ENCODE measurements at regions of chr3 and their contacts with region 1.

Region 1: GRCh38 chr3:69671082-69671952 is 67.9 kb upstream of the MITF start:
- DNase-seq: peak; percentile 61
- H3K4me3 ChIP-seq: no peak overlapping the region
- H3K27ac ChIP-seq: no peak overlapping the region
- H3K4me1 ChIP-seq: no peaks in the 10 kb centered on the region
- H3K27me3 ChIP-seq: peaks cover 23% of the 10 kb centered on the region

Region 2: DNA sequence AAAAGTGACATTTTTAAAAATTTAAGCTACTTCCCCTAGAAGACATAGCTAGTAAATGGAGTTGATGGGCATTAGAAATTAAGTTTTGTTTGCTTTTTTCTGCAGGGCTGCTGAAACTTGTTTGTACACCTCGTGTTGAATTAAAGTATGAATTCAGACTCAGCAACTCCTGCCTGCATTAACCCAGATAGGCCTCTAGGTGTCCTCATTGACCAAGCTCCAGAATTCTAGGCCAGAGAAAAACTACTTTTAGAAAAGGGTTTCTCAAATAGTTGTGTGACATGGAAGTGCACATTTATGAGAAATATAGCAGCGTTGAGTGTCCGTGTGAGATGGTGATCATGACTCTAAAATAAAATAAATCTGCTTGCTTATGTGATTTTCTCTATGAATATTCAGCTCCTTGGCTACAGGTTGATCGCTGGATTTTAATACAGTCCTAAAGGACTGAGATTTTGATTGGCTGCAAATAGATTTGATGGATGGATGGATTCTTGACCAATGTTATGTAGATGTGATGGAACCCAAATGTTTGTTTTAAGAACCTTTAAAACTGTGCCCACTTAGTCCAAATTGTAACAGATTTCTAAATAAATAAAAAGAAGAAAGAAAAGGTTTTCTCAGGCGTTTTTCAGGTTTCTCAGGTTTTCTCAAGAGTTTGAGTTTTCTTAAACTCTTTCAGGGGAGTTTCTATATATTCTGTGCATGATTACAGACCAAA is 509.6 kb before region 1 on chr3:
- in situ Hi-C with region 1: loop called (anchors 25 kb)
- DNase-seq: peak; percentile 69
- H3K4me3 ChIP-seq: no peak overlapping the region
- H3K27ac ChIP-seq: no peak overlapping the region
- H3K4me1 ChIP-seq: no peaks in the 10 kb centered on the region
- H3K27me3 ChIP-seq: peaks cover 9% of the 10 kb centered on the region

Region 3: DNA sequence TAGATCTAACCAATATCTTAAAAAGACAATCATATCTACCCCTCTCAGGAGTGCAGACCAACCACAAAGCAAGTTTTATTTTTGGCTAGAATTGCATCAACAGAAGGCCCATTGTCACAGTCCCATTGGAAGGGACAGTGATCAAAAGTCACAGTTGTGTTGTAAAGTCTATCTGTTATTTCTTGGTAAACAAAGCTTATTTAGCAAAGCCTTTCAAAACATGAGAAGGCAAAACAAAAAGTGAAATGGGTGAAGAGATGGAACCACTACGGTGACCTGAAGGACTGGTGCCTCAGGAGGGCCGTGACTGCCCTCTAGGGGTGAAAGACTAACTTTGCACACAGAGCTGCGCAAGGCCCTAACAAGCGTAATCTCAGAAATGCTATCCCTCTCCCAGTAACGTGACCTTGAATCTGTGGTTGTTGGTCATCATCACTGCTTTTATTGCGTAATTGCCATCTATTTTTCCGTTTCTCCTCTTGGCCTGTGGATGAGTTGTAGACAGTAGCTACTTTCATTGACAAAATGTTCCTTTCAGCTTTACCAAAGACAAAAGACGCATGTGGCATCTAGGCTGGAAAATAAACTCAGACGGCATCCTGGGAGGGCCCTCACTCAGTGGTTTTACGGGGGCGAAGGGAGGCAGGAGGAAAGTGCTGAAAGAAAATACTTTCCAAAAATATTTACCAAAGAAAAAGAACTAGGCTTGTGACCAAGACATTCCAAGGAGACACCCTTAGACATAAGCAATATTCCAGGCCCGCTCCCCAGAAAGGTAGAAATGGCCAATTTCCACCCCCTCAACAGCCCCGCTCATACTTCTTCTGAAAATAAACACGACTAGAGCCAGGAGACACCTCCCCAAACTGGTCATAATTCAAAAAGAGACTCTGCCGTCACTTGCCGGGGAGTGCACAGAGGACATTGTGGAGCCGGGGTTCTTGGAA is 364.8 kb before region 1 on chr3:
- in situ Hi-C with region 1: loop called (anchors 25 kb)
- DNase-seq: peak; percentile 90
- H3K4me3 ChIP-seq: no peak overlapping the region
- H3K27ac ChIP-seq: no peak overlapping the region
- H3K4me1 ChIP-seq: no peaks in the 10 kb centered on the region
- H3K27me3 ChIP-seq: no peaks in the 10 kb centered on the region

Region 4: DNA sequence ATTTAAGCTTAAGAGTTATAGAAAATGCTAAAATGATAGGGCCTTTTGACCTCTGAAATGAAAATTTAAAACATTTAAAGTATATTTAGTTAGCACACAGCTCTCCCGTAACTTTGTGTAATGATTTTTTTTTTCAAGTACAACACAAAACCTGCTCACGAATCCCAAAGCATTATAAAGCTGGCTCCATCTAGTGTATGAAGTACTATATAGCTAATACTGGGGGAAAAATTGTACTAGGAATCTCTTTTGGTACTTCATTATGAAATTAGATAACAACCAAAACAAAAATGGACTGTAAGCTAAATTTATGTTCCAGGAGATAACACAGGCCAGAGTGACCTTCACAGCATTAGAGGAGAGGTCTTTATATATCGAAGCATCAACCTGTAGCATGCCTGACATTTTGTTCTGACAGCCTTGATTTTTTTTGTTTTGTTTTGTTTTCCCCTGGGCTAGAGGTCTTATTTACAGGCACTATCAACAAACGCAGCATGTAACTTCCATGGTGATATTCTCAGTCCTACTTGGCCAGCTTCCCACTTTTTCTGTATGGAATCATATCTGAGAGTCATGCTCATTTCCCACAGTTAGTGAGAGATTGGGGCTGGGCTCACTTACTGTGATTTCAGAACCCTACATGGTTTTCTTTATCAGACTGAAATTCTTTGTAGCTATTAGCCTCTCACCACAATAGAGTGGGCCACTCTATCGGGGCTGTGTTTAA is 184.3 kb after region 1 on chr3:
- in situ Hi-C with region 1: loop called (anchors 25 kb)
- DNase-seq: peak; percentile 71
- H3K4me3 ChIP-seq: no peak overlapping the region
- H3K27ac ChIP-seq: no peak overlapping the region
- H3K4me1 ChIP-seq: no peaks in the 10 kb centered on the region
- H3K27me3 ChIP-seq: peaks cover 6% of the 10 kb centered on the region; the same call in 1 of the 2 replicates

Region 5: DNA sequence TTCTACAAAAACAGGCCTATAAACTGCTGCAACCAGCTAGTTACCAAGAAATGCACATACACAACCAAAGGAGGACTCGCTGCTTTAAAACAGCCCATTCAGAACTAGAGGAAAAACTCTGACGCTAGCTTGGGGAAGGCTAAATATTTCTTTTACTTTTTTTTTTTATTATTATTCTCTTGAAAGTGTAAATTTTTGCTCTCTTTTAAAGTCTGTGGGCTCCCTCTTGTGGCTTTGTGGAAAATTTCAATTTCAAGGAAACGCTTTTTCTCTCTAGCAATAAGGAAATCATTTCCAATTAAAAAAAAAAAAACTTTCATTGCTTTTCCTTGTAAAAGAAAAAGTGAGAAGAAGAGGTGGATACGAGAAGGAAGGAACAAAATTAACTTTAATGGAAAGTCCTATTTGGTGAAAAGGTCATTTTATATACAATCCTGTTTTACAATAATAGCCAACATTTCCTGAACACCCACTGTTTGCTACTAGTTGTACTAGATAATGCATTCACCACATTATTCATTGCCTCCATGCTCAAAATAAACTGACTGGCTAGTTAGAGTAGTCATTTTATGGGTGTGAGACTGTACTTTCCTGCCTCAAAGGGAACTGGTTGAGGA is 277.0 kb after region 1 on chr3:
- in situ Hi-C with region 1: loop called (anchors 25 kb)
- DNase-seq: peak; percentile 68
- H3K4me3 ChIP-seq: no peak overlapping the region
- H3K27ac ChIP-seq: no peak overlapping the region
- H3K4me1 ChIP-seq: no peaks in the 10 kb centered on the region
- H3K27me3 ChIP-seq: no peaks in the 10 kb centered on the region

Measured in GM23248 (cell line).